ENCODE measurements at regions of chr5 and their contacts with region 1.

Region 1: GRCh38 chr5:128201065-128201926 is 117.7 kb downstream of the SLC12A2 start:
- DNase-seq: peak; percentile 65 to 95
- H3K4me3 ChIP-seq: no peak overlapping the region
- CTCF ChIP-seq: peak in 1 of 3 donors; percentile 46
- POLR2A ChIP-seq: no peak

Region 2: GRCh38 chr5:127567026-127567768 is 634.1 kb before region 1 on chr5:
- intact Hi-C with region 1: loop called (anchors 5 kb)
- DNase-seq: no peak
- H3K4me3 ChIP-seq: no peak overlapping the region
- CTCF ChIP-seq: no peak
- POLR2A ChIP-seq: no peak

Region 3: GRCh38 chr5:127766676-127767340 is 434.5 kb before region 1 on chr5:
- intact Hi-C with region 1: loop called (anchors 10 kb)
- DNase-seq: no peak
- H3K4me3 ChIP-seq: no peak overlapping the region
- CTCF ChIP-seq: no peak
- POLR2A ChIP-seq: no peak